Left cardiac atrium (tissue), 4 donors: ENCODE measurements at regions of chr12 and their contacts with region 1.

Region 1: GRCh38 chr12:56987551-56988053 is 18.7 kb downstream of the ZBTB39 start:
- DNase-seq: peak; percentile 82
- ATAC-seq: peak; percentile 86

Region 2: DNA sequence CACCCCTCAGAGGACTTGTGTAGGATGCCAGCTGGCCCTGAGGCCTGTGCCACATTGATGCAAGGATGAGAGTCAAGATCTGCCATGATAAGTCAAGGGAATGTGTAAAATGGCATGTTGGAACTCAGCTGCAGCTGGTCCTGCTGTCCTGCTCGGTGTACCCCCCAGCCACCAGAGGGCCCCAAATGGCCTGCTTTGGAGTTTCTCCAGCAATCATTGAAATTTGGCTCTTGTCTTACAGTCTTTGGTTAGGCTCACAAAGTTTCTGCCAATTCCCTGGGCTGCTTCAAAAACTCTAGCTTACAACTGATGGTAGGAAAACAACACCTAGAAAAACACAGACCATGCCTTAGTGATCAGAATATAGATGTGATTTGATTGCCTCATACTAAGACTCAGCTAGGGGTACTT is 147.7 kb before region 1 on chr12:
- intact Hi-C with region 1: loop called in 1 of 2 experiments (anchors 10 kb)
- DNase-seq: peak; percentile 24
- ATAC-seq: peak; percentile 40 to 48

Region 3: DNA sequence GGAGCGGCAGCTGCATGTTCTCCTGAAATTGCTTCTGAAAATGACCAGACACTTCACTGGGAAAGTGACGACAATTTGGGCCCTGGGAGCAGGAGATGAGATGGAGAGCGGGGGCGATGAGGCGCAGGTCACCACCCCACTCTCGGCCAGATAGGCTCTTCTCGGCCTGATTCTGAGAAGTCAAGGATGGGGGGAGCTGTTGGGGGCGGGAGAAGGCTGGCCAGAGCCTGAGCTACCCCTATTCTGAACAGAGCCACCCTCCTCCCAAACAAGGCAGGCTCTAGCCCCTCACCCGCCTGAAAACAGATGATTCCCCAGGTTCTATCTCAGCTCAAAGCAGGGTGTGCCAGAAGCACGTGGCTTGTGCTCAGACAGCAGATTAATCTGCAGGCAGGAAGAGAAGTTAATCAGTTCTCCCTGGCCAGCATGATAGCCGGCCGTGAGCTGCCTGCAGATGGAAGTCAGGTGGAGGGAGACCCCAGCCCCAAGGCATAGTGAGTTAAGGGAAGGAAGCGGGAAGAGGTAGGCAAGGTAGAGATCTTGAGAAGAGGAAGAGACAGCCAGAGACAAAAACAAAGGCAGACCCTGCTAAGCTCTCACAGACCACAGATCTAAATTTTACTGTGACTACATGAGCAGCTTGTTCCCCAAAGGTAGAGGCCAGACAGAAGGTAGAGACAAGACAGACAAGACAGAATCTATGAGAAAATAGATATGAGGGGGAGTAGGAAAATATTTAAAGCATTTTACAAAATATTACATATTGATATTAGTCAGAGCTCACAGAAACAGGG is 39.6 kb after region 1 on chr12:
- intact Hi-C with region 1: no loop called
- DNase-seq: no peak
- ATAC-seq: peak; percentile 30 to 49